Right cardiac atrium (tissue), 5 donors: ENCODE measurements at regions of chr2 and their contacts with region 1.

Region 1: DNA sequence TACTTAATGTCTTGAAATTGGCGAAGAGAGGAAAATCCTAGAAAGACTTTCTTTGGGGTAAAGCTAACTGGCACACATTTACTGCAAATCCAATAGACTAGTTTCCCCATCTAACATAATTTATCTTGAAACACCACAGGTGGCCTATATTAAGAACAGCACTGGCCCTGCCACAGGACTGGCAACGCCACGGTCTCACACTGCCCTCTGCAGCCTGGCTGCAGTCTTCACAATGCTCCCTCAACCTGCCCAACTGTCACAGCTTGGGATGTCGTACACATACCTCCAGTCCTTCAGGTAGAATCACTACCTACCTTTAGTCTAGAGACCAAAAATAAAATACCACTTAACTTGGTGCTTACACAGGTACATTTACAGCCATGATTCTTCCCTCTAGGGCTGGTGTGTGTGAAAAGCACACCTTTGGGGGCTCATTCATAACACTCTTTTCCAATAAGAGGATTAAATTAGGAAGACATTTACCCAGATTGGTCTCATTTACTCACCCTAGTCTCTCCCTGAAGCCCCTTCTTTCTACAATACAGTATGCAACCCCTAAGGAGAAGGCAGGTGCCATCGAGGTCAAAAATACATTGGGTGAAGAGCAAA is 222.2 kb downstream of the C1D start:
- DNase-seq: peak; percentile 61 to 84 (median 82)
- ATAC-seq: peak; percentile 94 to 97
- H3K4me3 ChIP-seq: no peak overlapping the region
- H3K27ac ChIP-seq: no peak overlapping the region
- H3K4me1 ChIP-seq: no peaks in the 10 kb centered on the region
- H3K27me3 ChIP-seq: no peaks in the 10 kb centered on the region

Region 2: DNA sequence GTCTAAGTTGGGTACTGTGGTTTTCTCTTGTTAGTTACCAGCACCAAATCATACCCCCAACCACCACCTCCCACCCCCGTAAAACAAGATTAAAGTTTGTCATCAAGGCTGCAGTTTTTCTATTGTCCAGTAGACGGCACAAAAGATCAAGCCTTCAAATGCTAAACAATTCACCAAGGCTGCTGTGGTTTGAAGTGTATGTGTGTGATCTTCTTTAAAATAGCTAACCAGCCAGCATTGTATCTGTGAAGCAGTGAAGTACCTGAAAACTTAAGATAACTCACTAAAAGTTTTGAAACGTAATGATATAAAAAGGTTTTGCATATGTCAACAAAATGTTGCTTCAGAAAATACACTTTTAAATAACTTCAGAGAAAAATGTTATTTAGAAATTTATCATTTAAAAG is 1411.5 kb before region 1 on chr2:
- intact Hi-C with region 1: loop called in 3 of 4 experiments (anchors 5 to 10 kb)
- DNase-seq: no peak
- ATAC-seq: no peak
- H3K4me3 ChIP-seq: no peak overlapping the region
- H3K27ac ChIP-seq: no peak overlapping the region
- H3K4me1 ChIP-seq: no peaks in the 10 kb centered on the region
- H3K27me3 ChIP-seq: peaks cover 2% of the 10 kb centered on the region

Region 3: GRCh38 chr2:66434679-66435548 is 1405.7 kb before region 1 on chr2 and contains the start of gene MEIS1:
- intact Hi-C with region 1: loop called in 1 of 4 experiments (anchors 10 kb)
- DNase-seq: peak; percentile 92 to 96 (median 94)
- ATAC-seq: peak; percentile 94 to 95
- H3K4me3 ChIP-seq: peak within 1 kb of the TSS; percentile 86
- H3K27ac ChIP-seq: peak within 1 kb of the TSS; percentile 88
- H3K4me1 ChIP-seq: no peaks in the 10 kb centered on the region
- H3K27me3 ChIP-seq: no peaks in the 10 kb centered on the region
- total RNA-seq, gene MEIS1: 20.4 to 41.2 (median 33.6) TPM

Region 4: DNA sequence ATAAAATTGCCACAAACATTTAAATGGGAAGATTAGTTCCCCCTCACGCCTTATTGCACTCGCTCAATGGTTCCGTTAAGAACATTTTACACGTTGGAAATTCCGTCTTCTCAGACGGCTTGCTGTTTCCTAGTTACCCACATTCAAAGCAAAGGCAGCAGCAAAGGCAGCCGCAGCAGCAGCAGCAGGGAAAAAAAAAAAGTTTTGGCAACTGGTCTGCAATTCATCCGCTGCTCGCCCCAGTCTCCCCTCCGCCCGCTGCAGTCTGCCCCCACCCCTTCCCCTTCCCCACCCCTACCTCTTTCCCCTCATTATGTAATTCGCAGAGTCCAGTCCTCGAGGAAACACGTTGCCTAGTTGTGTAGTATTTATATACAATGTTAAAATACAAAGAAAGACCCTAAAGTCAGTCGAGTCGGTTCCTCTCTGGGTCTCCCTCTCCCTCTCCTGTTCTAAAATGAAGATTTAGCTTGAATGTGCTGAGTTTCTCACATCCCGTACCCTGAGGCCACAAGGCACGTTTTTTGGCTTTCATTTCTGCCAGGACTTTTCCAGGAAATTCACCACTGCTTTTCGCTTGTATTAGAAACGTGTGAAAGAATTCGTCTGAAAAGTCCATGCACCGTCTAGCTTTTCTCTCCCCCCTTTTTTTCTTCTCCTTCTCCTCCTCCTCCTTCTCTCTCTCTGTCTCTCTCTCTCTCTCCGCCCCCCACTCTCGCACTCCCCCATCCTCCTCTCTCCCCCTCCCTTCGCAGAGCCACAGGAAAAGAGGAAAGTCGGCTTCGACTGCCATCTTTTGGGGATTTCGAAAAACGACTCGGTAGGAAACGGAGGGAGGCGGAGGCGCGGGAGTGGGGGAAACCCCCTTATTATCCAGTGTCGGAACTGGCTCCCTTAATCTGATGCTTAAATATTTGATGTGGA is 1265.6 kb before region 1 on chr2:
- intact Hi-C with region 1: loop called in 2 of 4 experiments (anchors 10 kb)
- DNase-seq: peak; percentile 50 to 78 (median 76)
- ATAC-seq: peak; percentile 79 to 83
- H3K4me3 ChIP-seq: peak overlapping the region; percentile 83
- H3K27ac ChIP-seq: peak overlapping the region; percentile 36
- H3K4me1 ChIP-seq: no peaks in the 10 kb centered on the region
- H3K27me3 ChIP-seq: peaks cover 2% of the 10 kb centered on the region

Region 5: GRCh38 chr2:66587216-66587615 is 1253.3 kb before region 1 on chr2:
- intact Hi-C with region 1: loop called in 1 of 4 experiments (anchors 10 kb)
- DNase-seq: no peak
- ATAC-seq: no peak
- H3K4me3 ChIP-seq: no peak overlapping the region
- H3K27ac ChIP-seq: no peak overlapping the region
- H3K4me1 ChIP-seq: no peaks in the 10 kb centered on the region
- H3K27me3 ChIP-seq: peaks cover 3% of the 10 kb centered on the region

Region 6: GRCh38 chr2:67650291-67651133 is 190.1 kb before region 1 on chr2:
- intact Hi-C with region 1: loop called in 1 of 4 experiments (anchors 10 kb)
- DNase-seq: peak; percentile 83 to 90 (median 90)
- ATAC-seq: peak; percentile 92 to 94
- H3K4me3 ChIP-seq: no peak overlapping the region
- H3K27ac ChIP-seq: peak overlapping the region; percentile 49
- H3K4me1 ChIP-seq: peaks cover 7% of the 10 kb centered on the region
- H3K27me3 ChIP-seq: no peaks in the 10 kb centered on the region

Region 7: GRCh38 chr2:67886427-67886826 is 45.9 kb after region 1 on chr2:
- intact Hi-C with region 1: loop called in 1 of 4 experiments (anchors 2 kb)
- DNase-seq: no peak
- ATAC-seq: no peak
- H3K4me3 ChIP-seq: no peak overlapping the region
- H3K27ac ChIP-seq: no peak overlapping the region
- H3K4me1 ChIP-seq: no peaks in the 10 kb centered on the region
- H3K27me3 ChIP-seq: no peaks in the 10 kb centered on the region

Region 8: DNA sequence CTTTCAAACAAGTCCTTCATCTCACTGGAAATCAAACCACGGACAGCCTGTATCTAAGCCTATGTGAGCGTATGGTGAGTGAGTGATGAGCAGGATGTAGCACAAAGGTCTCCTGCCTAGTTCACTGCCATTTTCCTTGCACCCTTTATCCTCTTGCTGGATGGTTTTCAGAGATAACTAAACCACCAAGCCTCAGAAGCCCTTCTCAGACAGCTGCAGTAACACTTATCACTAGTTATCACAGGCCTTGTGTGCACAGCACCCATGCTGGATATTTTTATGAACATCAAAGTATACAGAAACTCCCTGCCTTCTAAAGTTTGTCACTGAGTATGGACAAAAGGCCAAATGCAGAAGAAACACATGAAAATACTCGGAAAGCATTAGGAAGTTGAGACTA is 152.8 kb after region 1 on chr2:
- intact Hi-C with region 1: no loop called
- DNase-seq: no peak
- ATAC-seq: no peak
- H3K4me3 ChIP-seq: no peak overlapping the region
- H3K27ac ChIP-seq: no peak overlapping the region
- H3K4me1 ChIP-seq: no peaks in the 10 kb centered on the region
- H3K27me3 ChIP-seq: no peaks in the 10 kb centered on the region